ENCODE measurements at regions of chrX and their contacts with region 1.

Region 1: DNA sequence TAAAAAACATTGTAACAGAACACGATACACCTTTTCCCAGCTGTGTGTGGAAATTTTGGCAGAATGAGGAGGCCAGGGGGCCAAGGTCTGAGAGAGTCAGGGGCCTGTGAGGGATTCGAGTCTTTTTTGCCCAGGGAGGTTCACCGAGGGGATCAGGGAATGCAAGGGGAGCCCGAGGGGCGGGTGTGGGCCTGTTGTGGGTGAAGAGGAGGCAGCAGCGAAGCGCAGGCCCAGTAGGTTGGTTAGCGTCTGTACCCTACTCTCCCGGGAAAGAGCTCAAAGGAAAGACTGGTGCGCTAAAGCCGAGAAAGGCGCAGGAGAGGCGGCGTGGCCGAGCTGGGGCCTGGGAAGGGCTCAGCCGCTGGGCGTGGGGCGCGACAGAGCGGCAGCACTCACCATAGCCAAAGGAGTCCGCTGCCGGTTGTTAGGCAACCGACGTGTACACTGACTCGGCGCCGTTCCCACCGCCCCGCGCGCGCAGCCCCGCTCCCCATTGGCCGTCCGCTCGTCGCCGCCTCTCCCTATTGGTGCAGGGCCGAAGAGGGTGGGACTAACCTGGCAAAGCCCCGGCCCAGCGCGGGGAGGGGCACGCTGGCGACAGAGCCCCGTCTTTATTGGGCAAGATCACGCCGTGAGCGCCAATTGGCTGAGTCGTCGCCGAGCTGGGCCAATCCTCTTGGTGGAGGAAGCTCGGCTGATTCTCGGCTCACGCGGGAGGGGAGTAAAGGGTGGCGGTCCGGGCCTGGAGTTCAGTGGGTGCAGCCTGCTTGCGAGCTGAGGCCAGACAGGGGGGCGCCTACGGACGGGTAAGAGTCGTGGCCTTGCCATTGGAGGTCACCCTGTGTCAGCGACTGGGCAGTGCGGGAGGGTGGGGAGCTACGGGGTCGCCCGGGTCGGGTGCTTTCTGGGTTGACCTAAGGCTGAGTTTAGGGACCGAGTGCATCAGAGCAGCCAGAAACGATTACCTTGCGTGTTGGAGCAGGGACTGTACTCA is at the starts of genes CETN2 and NSDHL:
- DNase-seq: peak; percentile 95
- ATAC-seq: peak; percentile 95
- H3K4me3 ChIP-seq: peak within 1 kb of the TSS; percentile 91
- H3K27ac ChIP-seq: peak within 1 kb of the TSS; percentile 45
- H3K4me1 ChIP-seq: peaks cover 12% of the 10 kb centered on the region
- H3K27me3 ChIP-seq: no peaks in the 10 kb centered on the region
- CTCF ChIP-seq: no peak
- total RNA-seq, gene CETN2: 40.9 and 42.9 TPM in 2 replicates
- total RNA-seq, gene NSDHL: 32.3 and 33.7 TPM in 2 replicates

Region 2: DNA sequence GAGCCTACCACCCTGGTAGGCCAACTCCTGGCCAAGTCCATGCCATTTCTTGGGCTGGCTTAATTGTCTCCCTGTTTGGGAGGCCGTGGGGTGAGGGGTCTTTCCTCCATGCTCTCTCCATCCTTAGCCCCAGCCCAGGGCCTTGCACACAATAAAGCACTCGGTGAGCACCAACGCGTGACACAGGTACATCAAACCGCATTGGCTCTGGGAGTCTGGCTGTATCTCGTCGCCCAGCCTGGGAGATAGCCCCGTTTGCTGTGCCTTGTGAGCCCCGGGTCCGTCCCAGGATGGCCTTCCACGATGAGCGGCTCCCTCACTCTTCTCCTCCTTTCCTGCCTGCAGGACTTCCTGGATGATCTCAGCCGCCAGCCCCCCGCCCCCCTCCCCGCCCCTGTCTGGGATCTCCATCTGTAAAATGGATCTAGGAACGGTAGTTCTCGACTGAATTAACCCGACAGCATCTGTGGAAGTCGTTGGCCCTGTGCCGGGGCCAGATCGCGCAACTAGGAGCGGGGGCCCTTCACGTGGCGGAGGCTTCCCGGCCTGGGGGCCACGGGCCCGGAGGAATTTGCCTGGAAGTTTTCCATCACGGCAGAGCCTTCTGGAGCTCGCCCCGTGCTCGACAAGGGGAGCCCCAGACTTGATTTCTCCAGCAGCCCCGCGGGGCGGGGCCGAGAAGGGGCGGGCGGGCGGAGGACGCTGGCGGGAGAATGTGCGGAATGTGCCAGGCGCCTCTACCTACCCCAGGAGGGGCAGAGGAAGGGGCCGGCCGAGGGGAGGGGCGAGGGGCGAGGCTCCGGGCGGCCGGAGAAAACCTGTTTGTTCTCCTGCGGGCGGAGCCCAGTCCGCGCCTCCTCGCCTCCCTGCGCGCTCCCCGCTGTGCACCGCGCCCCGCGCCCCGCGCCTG is 66.9 kb after region 1 on chrX and contains the start of gene ZNF185:
- CTCF ChIA-PET with region 1: no interaction called
- POLR2A ChIA-PET with region 1: interaction called, 4 read pairs
- intact Hi-C with region 1: loop called (anchors 2 kb)
- DNase-seq: peak; percentile 76
- ATAC-seq: peak; percentile 42
- H3K4me3 ChIP-seq: peak within 1 kb of the TSS; percentile 82
- H3K27ac ChIP-seq: peak within 1 kb of the TSS; percentile 100
- H3K4me1 ChIP-seq: peaks cover 83% of the 10 kb centered on the region
- H3K27me3 ChIP-seq: no peaks in the 10 kb centered on the region
- CTCF ChIP-seq: no peak
- total RNA-seq, gene ZNF185: 68.9 and 77.0 TPM in 2 replicates

Region 3: GRCh38 chrX:152926279-152926678 is 95.7 kb after region 1 on chrX:
- CTCF ChIA-PET with region 1: no interaction called
- POLR2A ChIA-PET with region 1: no interaction called
- intact Hi-C with region 1: loop called (anchors 2 kb)
- DNase-seq: peak; percentile 96
- ATAC-seq: peak; percentile 91
- H3K4me3 ChIP-seq: no peak overlapping the region
- H3K27ac ChIP-seq: no peak overlapping the region
- H3K4me1 ChIP-seq: peaks cover 12% of the 10 kb centered on the region
- H3K27me3 ChIP-seq: no peaks in the 10 kb centered on the region
- CTCF ChIP-seq: peak; percentile 74

Measured in PC-3 (cell line).